HepG2 (cell line): ENCODE measurements at regions of chr16 and their contacts with region 1.

Region 1: GRCh38 chr16:72066747-72067146 is 3.7 kb downstream of the HPR start:
- DNase-seq: peak; percentile 72
- ATAC-seq: peak; percentile 44
- H3K4me3 ChIP-seq: no peak overlapping the region
- H3K27ac ChIP-seq: no peak overlapping the region
- H3K4me1 ChIP-seq: peaks cover 78% of the 10 kb centered on the region
- H3K27me3 ChIP-seq: no peaks in the 10 kb centered on the region
- CTCF ChIP-seq: peak; percentile 85
- EP300 ChIP-seq: no peak
- POLR2A ChIP-seq: no peak
- RAD21 ChIP-seq: peak; percentile 87

Region 2: DNA sequence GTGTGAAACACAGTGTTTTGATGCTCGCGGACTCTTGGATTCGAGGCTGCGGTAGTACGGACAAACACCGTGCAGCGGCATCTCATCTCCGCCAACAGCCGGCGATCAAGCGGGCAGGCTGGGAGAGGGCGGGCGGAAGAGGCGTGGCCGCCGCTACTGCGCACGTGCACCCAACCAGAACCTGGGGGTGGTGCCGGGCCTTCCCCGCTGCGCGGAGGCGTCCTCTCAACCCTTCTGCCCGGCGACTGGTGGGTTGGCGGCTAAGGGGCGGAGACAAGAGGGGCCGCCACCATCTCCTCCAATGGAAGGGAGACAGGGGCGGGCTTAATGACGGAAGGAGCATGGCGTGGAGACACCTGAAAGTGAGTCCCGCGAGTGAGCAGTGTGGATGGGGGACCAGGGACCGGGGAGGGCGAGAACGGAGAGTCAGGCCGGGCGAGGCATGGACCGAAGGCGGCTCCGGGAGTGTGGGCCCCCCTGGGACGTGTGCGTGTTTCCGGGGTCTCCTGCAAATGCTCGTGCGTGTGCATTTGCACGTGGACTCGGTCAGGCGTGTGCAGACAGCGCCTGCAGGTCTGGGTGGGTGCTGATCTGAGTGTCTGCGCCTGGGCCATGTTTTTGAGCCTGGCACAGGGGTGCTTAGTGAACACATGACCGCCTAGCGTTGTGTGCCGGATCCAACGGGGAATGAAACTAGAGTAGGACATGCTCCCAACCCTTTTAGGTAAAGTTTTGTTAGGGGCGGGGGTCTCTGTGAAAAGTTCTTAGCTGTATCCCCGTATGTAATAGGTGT is 58.1 kb before region 1 on chr16 and contains the start of gene DHODH:
- CTCF ChIA-PET with region 1: no interaction called
- POLR2A ChIA-PET with region 1: interaction called, 9 read pairs
- in situ Hi-C with region 1: no loop called
- intact Hi-C with region 1: loop called (anchors 2 kb)
- DNase-seq: peak; percentile 99
- ATAC-seq: peak; percentile 99
- H3K4me3 ChIP-seq: peak within 1 kb of the TSS; percentile 91 to 100 (median 97)
- H3K27ac ChIP-seq: peak within 1 kb of the TSS; percentile 87
- H3K4me1 ChIP-seq: peaks cover 41% of the 10 kb centered on the region
- H3K27me3 ChIP-seq: no peaks in the 10 kb centered on the region; a peak in 1 of 5 replicates
- CTCF ChIP-seq: peak; percentile 48
- EP300 ChIP-seq: no peak
- POLR2A ChIP-seq: peak; percentile 98
- RAD21 ChIP-seq: peak; percentile 42
- total RNA-seq, gene DHODH: 12.7 and 16.4 TPM in 2 replicates

Region 3: GRCh38 chr16:72050769-72051464 is 15.8 kb before region 1 on chr16:
- CTCF ChIA-PET with region 1: no interaction called
- POLR2A ChIA-PET with region 1: interaction called, 123 read pairs
- in situ Hi-C with region 1: no loop called
- intact Hi-C with region 1: no loop called
- DNase-seq: no peak
- ATAC-seq: no peak
- H3K4me3 ChIP-seq: no peak overlapping the region
- H3K27ac ChIP-seq: no peak overlapping the region
- H3K4me1 ChIP-seq: peaks cover 61% of the 10 kb centered on the region
- H3K27me3 ChIP-seq: no peaks in the 10 kb centered on the region
- CTCF ChIP-seq: no peak
- EP300 ChIP-seq: no peak
- POLR2A ChIP-seq: no peak
- RAD21 ChIP-seq: no peak

Region 4: DNA sequence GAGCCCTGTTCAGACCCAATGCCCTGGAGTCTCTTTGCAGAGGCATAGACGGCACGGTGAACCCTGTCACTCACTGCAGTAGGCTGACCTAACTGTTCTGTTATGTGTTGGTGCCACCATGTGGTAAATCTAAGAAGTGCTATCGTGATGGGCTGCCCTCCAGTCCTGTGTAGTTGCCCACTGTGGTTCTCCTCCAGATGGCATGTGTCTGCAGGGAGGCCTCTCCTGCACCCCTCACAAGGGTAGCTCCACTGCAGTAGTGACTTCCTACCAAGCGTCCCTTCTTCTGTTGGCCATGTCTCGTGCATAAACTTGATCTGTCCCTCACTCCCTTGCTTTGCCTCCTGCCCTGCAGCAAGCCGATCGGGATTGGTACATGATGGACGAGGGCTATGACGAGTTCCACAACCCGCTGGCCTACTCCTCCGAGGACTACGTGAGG is 32.7 kb after region 1 on chr16:
- CTCF ChIA-PET with region 1: interaction called, 58 read pairs
- POLR2A ChIA-PET with region 1: interaction called, 51 read pairs
- in situ Hi-C with region 1: loop called (anchors 5 kb)
- intact Hi-C with region 1: loop called (anchors 1 kb)
- DNase-seq: peak; percentile 81
- ATAC-seq: peak; percentile 94
- H3K4me3 ChIP-seq: no peak overlapping the region
- H3K27ac ChIP-seq: no peak overlapping the region
- H3K4me1 ChIP-seq: peaks cover 23% of the 10 kb centered on the region
- H3K27me3 ChIP-seq: no peaks in the 10 kb centered on the region; a peak in 1 of 5 replicates
- CTCF ChIP-seq: peak; percentile 95
- EP300 ChIP-seq: no peak
- POLR2A ChIP-seq: peak; percentile 32 to 46; a peak in 2 of 4 replicates
- RAD21 ChIP-seq: peak; percentile 98

Region 5: GRCh38 chr16:72104905-72105304 is 38.2 kb after region 1 on chr16:
- CTCF ChIA-PET with region 1: interaction called, 58 read pairs
- POLR2A ChIA-PET with region 1: interaction called, 3 read pairs
- in situ Hi-C with region 1: loop called (anchors 5 kb)
- intact Hi-C with region 1: no loop called
- DNase-seq: no peak
- ATAC-seq: no peak
- H3K4me3 ChIP-seq: no peak overlapping the region
- H3K27ac ChIP-seq: no peak overlapping the region
- H3K4me1 ChIP-seq: no peaks in the 10 kb centered on the region
- H3K27me3 ChIP-seq: no peaks in the 10 kb centered on the region
- CTCF ChIP-seq: no peak
- EP300 ChIP-seq: no peak
- POLR2A ChIP-seq: 0 out of 4 replicates have a peak, but pooled peaks of 1 of the 2 experiments have one; percentile 18
- RAD21 ChIP-seq: no peak

Region 6: DNA sequence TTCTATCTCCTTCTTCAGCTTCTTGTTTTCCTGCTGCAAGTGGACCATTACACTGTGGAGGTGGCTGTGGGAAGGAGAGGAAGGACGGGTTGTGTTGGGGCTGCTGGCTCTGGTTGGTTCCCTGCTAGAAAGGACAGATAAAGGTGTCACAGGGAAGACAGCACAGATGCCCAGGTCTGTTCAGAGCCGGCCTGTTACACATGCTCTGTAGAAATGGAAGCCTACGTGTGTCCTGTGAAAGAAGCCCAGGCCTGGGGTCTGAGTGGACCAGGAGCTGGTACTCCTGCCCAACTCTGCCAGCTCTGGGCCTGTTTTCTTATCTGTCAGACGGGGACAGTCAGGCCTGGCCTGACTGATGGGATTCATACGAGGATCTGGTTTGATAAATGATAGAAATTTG is 53.3 kb after region 1 on chr16:
- CTCF ChIA-PET with region 1: no interaction called
- POLR2A ChIA-PET with region 1: no interaction called
- in situ Hi-C with region 1: no loop called
- intact Hi-C with region 1: no loop called
- DNase-seq: no peak
- ATAC-seq: no peak
- H3K4me3 ChIP-seq: no peak overlapping the region
- H3K27ac ChIP-seq: no peak overlapping the region
- H3K4me1 ChIP-seq: peaks cover 9% of the 10 kb centered on the region
- H3K27me3 ChIP-seq: no peaks in the 10 kb centered on the region
- CTCF ChIP-seq: no peak
- EP300 ChIP-seq: no peak
- POLR2A ChIP-seq: no peak
- RAD21 ChIP-seq: no peak

Region 7: GRCh38 chr16:72189865-72190371 is 123.2 kb after region 1 on chr16:
- CTCF ChIA-PET with region 1: no interaction called
- POLR2A ChIA-PET with region 1: no interaction called
- in situ Hi-C with region 1: no loop called
- intact Hi-C with region 1: no loop called
- DNase-seq: no peak
- ATAC-seq: no peak
- H3K4me3 ChIP-seq: no peak overlapping the region
- H3K27ac ChIP-seq: no peak overlapping the region
- H3K4me1 ChIP-seq: no peaks in the 10 kb centered on the region
- H3K27me3 ChIP-seq: no peaks in the 10 kb centered on the region
- CTCF ChIP-seq: no peak
- EP300 ChIP-seq: no peak
- POLR2A ChIP-seq: no peak
- RAD21 ChIP-seq: no peak